ENCODE measurements at regions of chr14 and their contacts with region 1.

Region 1: GRCh38 chr14:28751467-28752058 is 15.0 kb upstream of the FOXG1 start:
- DNase-seq: peak in 1 of 6 donors; percentile 31
- ATAC-seq: peak in 3 of 4 donors; percentile 63 to 89 (median 84)
- H3K4me3 ChIP-seq: no peak overlapping the region
- H3K27ac ChIP-seq: no peak overlapping the region
- H3K4me1 ChIP-seq: no peaks in the 10 kb centered on the region
- H3K27me3 ChIP-seq: peaks cover 0 to 13% (median 2%) of the 10 kb centered on the region in 4 donors
- CTCF ChIP-seq: peak; percentile 11 to 56 (median 42)

Region 2: DNA sequence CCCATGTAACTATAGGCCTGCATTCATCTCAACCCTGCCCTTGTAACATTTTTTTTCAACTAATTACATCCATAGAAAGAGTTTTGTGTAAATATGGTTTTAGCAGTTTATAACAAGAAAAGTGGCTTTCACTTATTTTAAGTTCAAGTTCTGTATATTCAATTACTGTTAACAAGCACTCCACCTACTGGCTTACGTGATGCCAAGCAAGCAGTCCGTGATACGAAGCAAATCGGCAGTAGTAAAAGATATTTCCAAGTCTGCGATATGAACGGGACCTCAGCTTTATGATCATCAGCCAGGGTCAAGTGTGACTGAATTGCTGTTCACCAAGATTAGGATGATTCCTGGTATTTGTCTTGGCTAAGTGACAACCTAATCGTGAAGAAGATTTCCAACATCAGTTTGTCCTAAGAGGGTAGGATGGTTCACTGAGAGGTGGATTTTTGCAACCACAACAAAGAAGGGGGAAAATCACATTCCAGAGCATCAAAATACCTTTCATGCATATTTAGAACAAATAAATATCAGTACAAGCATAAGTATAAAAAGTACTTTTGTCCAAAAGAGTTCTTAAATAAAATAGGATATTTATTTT is 471.2 kb after region 1 on chr14:
- intact Hi-C with region 1: loop called in 1 of 3 experiments (anchors 10 kb)
- DNase-seq: peak in 1 of 6 donors; percentile 9
- ATAC-seq: peak in 1 of 4 donors; percentile 22
- H3K4me3 ChIP-seq: no peak overlapping the region
- H3K27ac ChIP-seq: no peak overlapping the region
- H3K4me1 ChIP-seq: no peaks in the 10 kb centered on the region
- H3K27me3 ChIP-seq: peaks cover 0 to 23% (median 3%) of the 10 kb centered on the region in 4 donors
- CTCF ChIP-seq: peak in 1 of 4 donors; percentile 9

Region 3: DNA sequence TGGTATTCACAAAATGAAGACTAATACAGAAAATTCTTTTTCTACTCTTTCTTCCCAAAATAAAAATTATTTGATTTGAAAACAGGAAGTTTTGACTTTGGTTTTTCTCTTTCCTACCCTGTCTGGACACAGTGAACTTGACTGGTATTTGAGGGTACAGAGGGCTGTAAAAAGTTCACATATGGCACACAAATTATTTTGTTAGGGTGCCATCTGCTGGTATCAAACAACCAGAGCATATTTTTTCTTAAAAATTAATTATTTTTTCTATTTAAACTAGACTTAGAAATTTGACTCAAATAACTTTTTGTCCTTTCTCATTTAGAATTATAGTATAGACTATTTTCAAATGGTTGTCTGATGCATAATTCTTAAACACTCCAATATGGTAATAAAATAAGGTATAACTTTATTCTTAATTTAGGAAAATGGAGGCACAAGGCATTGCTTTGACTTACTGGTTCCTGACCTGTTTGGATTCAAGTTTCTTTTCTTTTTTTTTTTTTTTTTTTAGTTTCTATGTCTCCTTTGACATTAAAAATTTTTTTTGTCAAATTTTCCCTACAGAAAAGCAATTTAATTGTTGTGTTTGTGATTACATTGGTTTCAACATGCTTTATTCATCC is 785.4 kb after region 1 on chr14:
- intact Hi-C with region 1: loop called in 2 of 3 experiments (anchors 10 kb)
- DNase-seq: no peak
- ATAC-seq: peak in 1 of 4 donors; percentile 38
- H3K4me3 ChIP-seq: no peak overlapping the region
- H3K27ac ChIP-seq: no peak overlapping the region
- H3K4me1 ChIP-seq: no peaks in the 10 kb centered on the region
- H3K27me3 ChIP-seq: no peaks in the 10 kb centered on the region
- CTCF ChIP-seq: peak in 2 of 4 donors; percentile 22

Region 4: GRCh38 chr14:30214461-30215090 is 1463.0 kb after region 1 on chr14:
- intact Hi-C with region 1: loop called in 1 of 3 experiments (anchors 10 kb)
- DNase-seq: peak in 1 of 6 donors; percentile 19
- ATAC-seq: peak; percentile 66 to 87 (median 82)
- H3K4me3 ChIP-seq: no peak overlapping the region
- H3K27ac ChIP-seq: no peak overlapping the region
- H3K4me1 ChIP-seq: no peaks in the 10 kb centered on the region
- H3K27me3 ChIP-seq: peaks cover 0 to 3% (median 0%) of the 10 kb centered on the region in 4 donors
- CTCF ChIP-seq: peak in 3 of 4 donors; percentile 33 to 41 (median 35)

Measured in pancreas (tissue), 10 donors.